Caco-2 (cell line): ENCODE measurements at regions of chr11 and their contacts with region 1.

Region 1: DNA sequence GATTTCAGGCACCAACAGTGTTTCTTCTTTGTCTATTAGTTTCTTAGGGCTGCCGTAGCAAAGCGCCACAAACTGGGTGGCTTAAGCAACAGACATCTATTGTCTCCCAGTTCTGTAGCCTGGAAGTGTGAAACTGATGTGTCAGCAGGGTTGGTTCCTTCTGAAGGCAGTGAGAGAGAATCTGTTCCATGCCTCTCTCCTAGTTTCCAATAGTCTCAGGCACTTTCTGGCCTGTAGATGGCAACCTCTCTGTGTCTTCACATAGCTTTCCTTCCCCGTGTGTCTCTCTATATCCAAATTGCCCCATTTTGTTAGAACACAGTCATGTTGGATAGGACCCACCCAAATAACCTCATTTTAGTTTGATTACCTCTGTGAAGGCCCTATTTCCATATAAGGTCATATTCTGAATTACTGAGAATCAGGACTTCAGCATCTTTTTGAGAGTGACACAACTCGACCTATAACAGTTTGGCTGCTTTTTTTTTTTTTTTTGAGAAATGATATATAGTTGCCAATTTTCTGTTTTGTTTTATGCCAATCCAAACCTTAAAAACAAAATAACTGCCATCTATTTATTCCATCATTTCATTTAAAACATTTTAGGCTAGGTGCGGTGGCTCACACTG is 108.2 kb downstream of the SLC36A4 start:
- DNase-seq: peak; percentile 47 to 52
- H3K4me3 ChIP-seq: no peak overlapping the region
- H3K4me3 Mint-ChIP-seq: no peak overlapping the region
- H3K27ac Mint-ChIP-seq: no peak overlapping the region
- H3K4me1 ChIP-seq: no peaks in the 10 kb centered on the region
- H3K4me1 Mint-ChIP-seq: no peaks in the 10 kb centered on the region
- H3K27me3 ChIP-seq: no peaks in the 10 kb centered on the region
- H3K27me3 Mint-ChIP-seq: peaks cover 6% of the 10 kb centered on the region
- CTCF ChIP-seq: peak; percentile 65 to 88

Region 2: GRCh38 chr11:93159721-93160120 is 70.1 kb after region 1 on chr11:
- CTCF ChIA-PET with region 1: no interaction called
- POLR2A ChIA-PET with region 1: no interaction called
- intact Hi-C with region 1: no loop called
- DNase-seq: no peak
- H3K4me3 ChIP-seq: no peak overlapping the region
- H3K4me3 Mint-ChIP-seq: no peak overlapping the region
- H3K27ac Mint-ChIP-seq: no peak overlapping the region
- H3K4me1 ChIP-seq: no peaks in the 10 kb centered on the region
- H3K4me1 Mint-ChIP-seq: no peaks in the 10 kb centered on the region
- H3K27me3 ChIP-seq: no peaks in the 10 kb centered on the region
- H3K27me3 Mint-ChIP-seq: no peaks in the 10 kb centered on the region
- CTCF ChIP-seq: no peak

Region 3: GRCh38 chr11:93169950-93170561 is 80.5 kb after region 1 on chr11:
- CTCF ChIA-PET with region 1: no interaction called
- POLR2A ChIA-PET with region 1: no interaction called
- intact Hi-C with region 1: loop called (anchors 1 kb)
- DNase-seq: peak in 1 of 2 experiments; percentile 36
- H3K4me3 ChIP-seq: no peak overlapping the region
- H3K4me3 Mint-ChIP-seq: no peak overlapping the region
- H3K27ac Mint-ChIP-seq: no peak overlapping the region
- H3K4me1 ChIP-seq: no peaks in the 10 kb centered on the region
- H3K4me1 Mint-ChIP-seq: no peaks in the 10 kb centered on the region
- H3K27me3 ChIP-seq: no peaks in the 10 kb centered on the region
- H3K27me3 Mint-ChIP-seq: no peaks in the 10 kb centered on the region
- CTCF ChIP-seq: peak; percentile 52 to 72

Region 4: GRCh38 chr11:93225662-93226061 is 136.1 kb after region 1 on chr11:
- CTCF ChIA-PET with region 1: interaction called, 5 read pairs
- POLR2A ChIA-PET with region 1: no interaction called
- intact Hi-C with region 1: loop called (anchors 1 kb)
- DNase-seq: no peak
- H3K4me3 ChIP-seq: no peak overlapping the region
- H3K4me3 Mint-ChIP-seq: no peak overlapping the region
- H3K27ac Mint-ChIP-seq: no peak overlapping the region
- H3K4me1 ChIP-seq: peaks cover 5% of the 10 kb centered on the region; the same call in 1 of the 2 replicates
- H3K4me1 Mint-ChIP-seq: peaks cover 11% of the 10 kb centered on the region
- H3K27me3 ChIP-seq: 0 out of 2 replicates have a peak, but pooled peaks cover 1% of the 10 kb centered on the region
- H3K27me3 Mint-ChIP-seq: peaks cover 10% of the 10 kb centered on the region
- CTCF ChIP-seq: peak in 1 of 2 experiments; percentile 38